ENCODE measurements at regions of chr19 and their contacts with region 1.

Region 1: GRCh38 chr19:44093931-44094765 is at the start of gene ZNF224:
- DNase-seq: peak; percentile 89 to 95 (median 94)
- H3K4me3 ChIP-seq: peak within 1 kb of the TSS; percentile 53 to 96 (median 85)
- H3K27ac ChIP-seq: peak within 1 kb of the TSS in 50 of 59 donors; percentile 1 to 87 (median 68)
- H3K27me3 ChIP-seq: no peaks in the 10 kb centered on the region
- CTCF ChIP-seq: peak in 23 of 56 donors; percentile 8 to 46 (median 25)
- total RNA-seq, gene ZNF224: 25.6 to 58.3 (median 42.2) TPM

Region 2: DNA sequence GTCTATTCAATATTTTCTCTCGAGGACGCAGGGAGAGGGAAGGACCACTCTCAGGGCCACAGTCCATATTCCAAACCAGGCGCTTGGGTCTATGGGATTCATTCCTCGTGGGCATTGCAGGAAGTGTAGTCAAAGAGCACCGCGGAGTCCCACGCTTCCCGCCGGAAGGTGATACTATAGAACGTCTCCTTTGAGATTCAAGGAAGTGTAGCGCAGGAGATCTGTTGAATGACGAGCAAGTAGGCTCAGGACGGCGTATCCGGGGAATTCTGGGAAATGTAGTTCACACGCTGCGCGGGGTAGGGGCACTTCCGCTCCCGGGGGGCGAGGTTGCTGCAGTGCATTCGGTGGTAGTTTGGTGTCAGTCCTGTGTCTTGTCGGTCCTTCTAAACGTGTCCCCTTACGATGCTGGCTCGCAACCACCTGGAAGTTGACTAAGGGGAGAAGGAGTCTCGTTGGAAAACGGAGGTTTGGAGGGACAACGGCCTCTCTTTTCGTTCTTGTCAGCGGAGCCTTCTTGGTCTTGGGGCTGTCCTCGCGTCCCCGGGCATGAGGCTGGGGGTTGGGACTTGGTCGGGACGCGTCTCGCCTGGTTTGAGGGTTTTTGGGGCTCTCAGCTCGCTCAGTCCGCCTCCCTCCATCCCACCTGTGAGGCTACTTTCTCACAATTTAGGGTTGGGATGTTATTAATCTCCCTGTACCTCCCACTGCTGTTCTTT is 22.2 kb before region 1 on chr19 and contains the start of gene ZNF284:
- intact Hi-C with region 1: loop called in 1 of 2 experiments (anchors 2 kb)
- DNase-seq: peak; percentile 84 to 95 (median 92)
- H3K4me3 ChIP-seq: peak within 1 kb of the TSS; percentile 59 to 96 (median 79)
- H3K27ac ChIP-seq: peak within 1 kb of the TSS in 25 of 59 donors; percentile 3 to 73 (median 46)
- H3K27me3 ChIP-seq: no peaks in the 10 kb centered on the region
- CTCF ChIP-seq: peak in 22 of 56 donors; percentile 3 to 42 (median 21)
- total RNA-seq, gene ZNF284: 2.3 to 6.7 (median 4.1) TPM

Region 3: GRCh38 chr19:44141191-44142058 is 47.3 kb after region 1 on chr19 and contains the start of gene ZNF234:
- intact Hi-C with region 1: no loop called
- DNase-seq: peak; percentile 78 to 93 (median 89)
- H3K4me3 ChIP-seq: peak within 1 kb of the TSS; percentile 68 to 99 (median 92)
- H3K27ac ChIP-seq: peak within 1 kb of the TSS in 52 of 59 donors; percentile 1 to 88 (median 76)
- H3K27me3 ChIP-seq: no peaks in the 10 kb centered on the region
- CTCF ChIP-seq: peak in 21 of 56 donors; percentile 1 to 34 (median 17)
- total RNA-seq, gene ZNF234: 8.8 to 27.0 (median 15.6) TPM

Region 4: GRCh38 chr19:44207126-44207803 is 113.1 kb after region 1 on chr19:
- intact Hi-C with region 1: loop called in 1 of 2 experiments (anchors 5 kb)
- DNase-seq: peak; percentile 76 to 91 (median 88)
- H3K4me3 ChIP-seq: peak overlapping the region; percentile 62 to 99 (median 88)
- H3K27ac ChIP-seq: peak overlapping the region; percentile 1 to 98 (median 89)
- H3K27me3 ChIP-seq: peaks cover 0 to 5% (median 0%) of the 10 kb centered on the region in 45 donors
- CTCF ChIP-seq: peak in 21 of 56 donors; percentile 8 to 47 (median 21)

Region 5: DNA sequence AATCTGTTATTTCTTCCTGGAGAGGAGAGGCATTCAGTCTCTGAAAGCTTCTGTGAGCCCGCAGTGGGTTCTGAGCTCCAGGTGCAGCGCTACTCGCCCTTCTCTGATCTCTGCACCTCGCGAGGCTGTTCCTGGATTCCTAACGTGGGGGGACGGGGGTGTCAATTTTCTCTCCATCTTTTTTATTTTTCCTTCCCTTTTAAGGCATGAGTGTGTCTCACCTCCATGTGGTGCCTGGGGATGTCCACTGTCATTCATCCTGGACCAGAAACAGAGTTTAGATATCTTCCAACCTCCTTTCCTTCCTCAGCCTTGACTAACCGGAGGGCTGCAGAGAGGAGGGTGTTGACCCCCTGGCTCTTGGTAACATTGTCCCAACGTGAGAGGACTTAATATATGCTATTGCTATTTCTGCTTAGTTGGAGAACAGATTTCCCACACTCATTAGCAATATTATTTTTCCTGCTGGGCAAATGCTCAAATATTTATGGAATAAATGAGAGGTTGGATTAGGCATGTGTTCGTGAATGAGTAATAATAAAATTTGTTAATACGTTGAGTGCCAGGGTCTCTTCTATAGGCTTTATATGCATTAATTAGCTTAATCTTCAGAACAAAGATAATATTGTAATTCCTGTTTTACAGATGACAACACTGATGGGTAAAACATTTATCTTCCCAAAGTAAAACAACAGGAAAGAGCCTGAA is 166.4 kb after region 1 on chr19:
- intact Hi-C with region 1: no loop called
- DNase-seq: peak in 1 of 10 donors; percentile 17
- H3K4me3 ChIP-seq: peak overlapping the region in 58 of 59 donors; percentile 2 to 68 (median 55)
- H3K27ac ChIP-seq: peak overlapping the region in 25 of 59 donors; percentile 27 to 80 (median 64)
- H3K27me3 ChIP-seq: no peaks in the 10 kb centered on the region
- CTCF ChIP-seq: no peak

Measured in dorsolateral prefrontal cortex (tissue), 120 donors.